ENCODE measurements at regions of chr1 and their contacts with region 1.

Region 1: DNA sequence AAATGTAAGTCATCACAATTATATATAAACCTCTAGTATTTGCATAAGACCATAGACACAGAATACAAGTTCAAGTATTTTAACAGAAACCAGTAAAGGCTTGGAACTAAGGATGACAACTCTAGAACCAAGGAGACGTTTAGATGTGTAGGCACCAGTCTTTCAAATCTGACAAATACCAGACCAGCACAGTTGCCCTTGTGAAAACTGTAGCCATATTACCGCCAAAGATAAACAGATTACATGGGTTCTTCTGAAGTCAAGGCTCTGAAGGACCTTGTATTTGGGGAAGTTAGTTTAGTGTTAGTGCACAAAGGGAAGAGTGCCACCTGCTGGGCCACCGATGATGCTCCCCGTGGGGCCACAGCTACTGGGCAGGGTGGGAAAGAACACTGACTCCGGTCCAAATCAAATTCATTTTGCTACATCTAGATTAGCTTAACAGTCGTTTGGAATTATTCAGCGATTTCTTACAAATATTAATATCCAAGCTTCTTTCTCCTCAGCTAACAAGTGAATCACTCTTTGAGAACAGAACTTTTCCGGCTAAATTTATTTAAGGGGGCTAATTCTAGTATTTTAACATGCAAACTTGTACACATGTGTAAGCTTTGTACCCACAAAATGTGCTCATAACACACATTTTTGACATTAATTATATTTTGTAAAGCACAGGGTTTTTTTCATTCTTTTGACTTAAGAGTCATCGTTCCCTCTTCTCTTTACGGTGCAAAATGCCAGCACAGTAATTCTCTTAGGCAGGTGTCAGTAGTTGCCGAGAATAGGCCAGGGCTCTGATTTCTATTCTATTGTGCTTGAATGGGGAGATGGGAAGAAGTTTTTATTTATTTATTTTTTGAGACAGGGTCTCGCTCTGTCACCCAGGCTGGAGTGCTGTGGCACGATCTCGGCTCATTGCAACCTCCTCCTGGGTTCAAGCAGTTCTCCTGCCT is 8.0 kb upstream of the NIBAN1 start:
- DNase-seq: peak; percentile 92
- H3K4me3 Mint-ChIP-seq: no peak overlapping the region
- H3K27ac Mint-ChIP-seq: no peak overlapping the region
- H3K4me1 Mint-ChIP-seq: peaks cover 7% of the 10 kb centered on the region
- H3K27me3 Mint-ChIP-seq: peaks cover 44% of the 10 kb centered on the region

Region 2: DNA sequence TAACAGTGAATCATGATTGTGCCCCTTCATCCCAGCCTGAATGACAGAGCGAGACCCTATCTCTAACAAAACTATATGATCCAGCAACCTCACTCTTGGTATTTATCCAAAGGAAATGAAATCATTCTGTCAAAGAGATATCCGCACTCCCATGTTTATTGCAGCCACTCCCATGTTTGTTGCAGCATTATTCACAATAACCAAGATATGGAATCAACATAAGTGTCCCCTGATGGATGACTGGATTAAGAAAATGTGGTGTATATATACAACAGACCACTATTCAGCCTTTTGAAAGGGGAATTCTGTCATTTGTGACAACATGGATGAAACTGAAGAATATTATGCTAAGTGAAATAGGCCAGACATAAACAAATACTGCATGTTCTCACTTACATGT is 130.1 kb after region 1 on chr1:
- intact Hi-C with region 1: no loop called
- DNase-seq: no peak
- H3K4me3 Mint-ChIP-seq: no peak overlapping the region
- H3K27ac Mint-ChIP-seq: no peak overlapping the region
- H3K4me1 Mint-ChIP-seq: no peaks in the 10 kb centered on the region
- H3K27me3 Mint-ChIP-seq: peaks cover 2% of the 10 kb centered on the region

Region 3: GRCh38 chr1:185170291-185170848 is 188.1 kb after region 1 on chr1:
- intact Hi-C with region 1: loop called (anchors 1 kb)
- DNase-seq: peak; percentile 85
- H3K4me3 Mint-ChIP-seq: no peak overlapping the region
- H3K27ac Mint-ChIP-seq: no peak overlapping the region
- H3K4me1 Mint-ChIP-seq: peaks cover 9% of the 10 kb centered on the region
- H3K27me3 Mint-ChIP-seq: no peaks in the 10 kb centered on the region